Transverse colon (tissue), 4 donors: ENCODE measurements at regions of chr10 and their contacts with region 1.

Region 1: DNA sequence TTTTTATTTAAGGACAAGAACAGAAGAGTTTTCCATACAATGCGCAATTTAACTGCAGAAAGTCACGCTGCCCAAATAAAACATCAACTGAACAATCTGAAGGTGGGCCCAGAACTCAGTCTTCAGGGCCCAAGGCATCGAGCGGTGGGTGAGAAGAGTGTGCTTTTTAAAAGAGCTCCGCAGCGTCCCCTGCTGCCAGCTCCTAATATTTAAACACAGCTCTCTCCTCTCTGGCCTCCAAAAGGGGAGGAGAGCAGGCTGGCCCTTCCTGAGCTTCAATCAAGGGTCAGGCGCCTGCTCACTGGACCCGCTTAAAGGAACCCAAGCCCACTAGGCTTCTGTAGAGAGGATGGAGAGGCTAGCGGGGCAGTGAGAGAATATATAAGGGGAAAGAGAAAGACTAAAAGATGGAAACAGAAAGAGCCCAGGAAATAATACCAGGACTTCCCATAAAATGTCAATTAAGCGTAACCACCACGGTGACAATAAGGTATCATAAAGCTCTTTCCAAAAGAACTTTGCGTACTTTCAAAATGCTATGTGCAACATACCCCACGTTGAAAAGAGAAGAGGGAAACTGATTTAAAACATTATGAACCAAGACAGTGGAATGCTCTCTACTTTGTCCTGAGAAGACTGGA is 2.8 kb downstream of the FAM53B start:
- DNase-seq: peak; percentile 91
- H3K4me3 ChIP-seq: peak overlapping the region in 3 of 4 donors; percentile 9 to 89 (median 73)
- H3K27ac ChIP-seq: peak overlapping the region; percentile 86 to 94 (median 89)
- H3K4me1 ChIP-seq: peaks cover 65 to 81% (median 78%) of the 10 kb centered on the region in 4 donors
- H3K27me3 ChIP-seq: no peaks in the 10 kb centered on the region
- CTCF ChIP-seq: peak; percentile 82 to 99 (median 88)
- EP300 ChIP-seq: no peak
- POLR2A ChIP-seq: no peak

Region 2: GRCh38 chr10:124530215-124530665 is 211.2 kb before region 1 on chr10:
- in situ Hi-C with region 1: loop called (anchors 5 to 10 kb)
- intact Hi-C with region 1: loop called (anchors 2 kb)
- DNase-seq: peak; percentile 91
- H3K4me3 ChIP-seq: no peak overlapping the region
- H3K27ac ChIP-seq: no peak overlapping the region
- H3K4me1 ChIP-seq: peaks cover 0 to 17% (median 6%) of the 10 kb centered on the region in 4 donors
- H3K27me3 ChIP-seq: no peaks in the 10 kb centered on the region
- CTCF ChIP-seq: peak; percentile 83 to 93 (median 87)
- EP300 ChIP-seq: no peak
- POLR2A ChIP-seq: no peak

Region 3: GRCh38 chr10:124539935-124540641 is 201.3 kb before region 1 on chr10:
- in situ Hi-C with region 1: loop called (anchors 5 to 10 kb)
- intact Hi-C with region 1: loop called (anchors 1 kb)
- DNase-seq: peak; percentile 67
- H3K4me3 ChIP-seq: no peak overlapping the region
- H3K27ac ChIP-seq: no peak overlapping the region
- H3K4me1 ChIP-seq: peaks cover 0 to 7% (median 3%) of the 10 kb centered on the region in 4 donors
- H3K27me3 ChIP-seq: no peaks in the 10 kb centered on the region
- CTCF ChIP-seq: peak; percentile 58 to 75 (median 70)
- EP300 ChIP-seq: no peak
- POLR2A ChIP-seq: no peak

Region 4: GRCh38 chr10:124632064-124632531 is 109.3 kb before region 1 on chr10:
- in situ Hi-C with region 1: loop called in 1 of 4 experiments (anchors 25 kb)
- intact Hi-C with region 1: loop called (anchors 5 kb)
- DNase-seq: no peak
- H3K4me3 ChIP-seq: no peak overlapping the region
- H3K27ac ChIP-seq: no peak overlapping the region
- H3K4me1 ChIP-seq: peaks cover 17 to 29% (median 23%) of the 10 kb centered on the region in 4 donors
- H3K27me3 ChIP-seq: no peaks in the 10 kb centered on the region
- CTCF ChIP-seq: peak in 1 of 5 experiments; percentile 5
- EP300 ChIP-seq: no peak
- POLR2A ChIP-seq: no peak

Region 5: GRCh38 chr10:124647421-124648130 is 93.8 kb before region 1 on chr10:
- in situ Hi-C with region 1: loop called in 2 of 4 experiments (anchors 10 to 25 kb)
- intact Hi-C with region 1: no loop called
- DNase-seq: peak; percentile 79
- H3K4me3 ChIP-seq: no peak overlapping the region
- H3K27ac ChIP-seq: peak overlapping the region; percentile 62 to 81 (median 74)
- H3K4me1 ChIP-seq: peaks cover 31 to 66% (median 42%) of the 10 kb centered on the region in 4 donors
- H3K27me3 ChIP-seq: no peaks in the 10 kb centered on the region
- CTCF ChIP-seq: peak; percentile 12 to 60 (median 28)
- EP300 ChIP-seq: no peak
- POLR2A ChIP-seq: no peak